Activated CD8-positive, alpha-beta T cell treated with anti-CD3 and anti-CD28 coated beads, Interleukin-2, amount 10 ng/mL, durations not matched to agents 7 days and 5 days (primary cell): ENCODE measurements at regions of chr6 and their contacts with region 1.

Region 1: DNA sequence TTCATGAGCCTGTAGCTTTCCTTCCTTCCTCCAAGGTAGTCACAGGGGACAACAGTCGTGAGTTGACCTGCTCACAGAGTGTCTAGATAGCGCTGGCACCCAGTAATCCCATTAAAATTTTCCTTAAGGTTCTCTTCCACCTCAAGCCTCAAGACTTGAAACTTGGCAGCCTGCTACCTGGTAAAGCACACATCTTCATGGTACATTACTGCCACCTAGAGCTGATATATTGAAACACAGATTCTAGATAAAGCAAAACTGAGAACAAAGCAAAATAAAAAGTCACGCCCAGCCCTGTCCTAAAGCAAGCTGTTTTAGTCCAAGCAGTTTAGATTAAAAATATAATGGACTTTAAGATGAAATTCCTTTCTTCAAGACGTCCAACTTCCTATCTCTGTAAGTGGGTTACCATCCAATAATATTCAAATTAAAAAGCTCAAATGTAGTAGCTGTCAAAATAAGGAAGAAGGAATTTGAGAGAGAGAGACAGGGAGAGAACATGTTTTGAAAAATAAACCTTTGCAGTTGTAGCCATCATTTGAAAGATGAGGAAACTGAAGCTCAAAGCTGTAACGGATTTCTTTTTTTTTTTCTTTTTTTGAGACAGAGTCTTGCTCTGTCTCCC is 50.7 kb upstream of the CD83 start:
- DNase-seq: peak; percentile 31
- ATAC-seq: peak; percentile 84
- H3K4me3 Mint-ChIP-seq: no peak overlapping the region
- H3K27ac Mint-ChIP-seq: no peak overlapping the region
- H3K4me1 Mint-ChIP-seq: peaks cover 13% of the 10 kb centered on the region
- H3K27me3 Mint-ChIP-seq: peaks cover 21% of the 10 kb centered on the region

Region 2: DNA sequence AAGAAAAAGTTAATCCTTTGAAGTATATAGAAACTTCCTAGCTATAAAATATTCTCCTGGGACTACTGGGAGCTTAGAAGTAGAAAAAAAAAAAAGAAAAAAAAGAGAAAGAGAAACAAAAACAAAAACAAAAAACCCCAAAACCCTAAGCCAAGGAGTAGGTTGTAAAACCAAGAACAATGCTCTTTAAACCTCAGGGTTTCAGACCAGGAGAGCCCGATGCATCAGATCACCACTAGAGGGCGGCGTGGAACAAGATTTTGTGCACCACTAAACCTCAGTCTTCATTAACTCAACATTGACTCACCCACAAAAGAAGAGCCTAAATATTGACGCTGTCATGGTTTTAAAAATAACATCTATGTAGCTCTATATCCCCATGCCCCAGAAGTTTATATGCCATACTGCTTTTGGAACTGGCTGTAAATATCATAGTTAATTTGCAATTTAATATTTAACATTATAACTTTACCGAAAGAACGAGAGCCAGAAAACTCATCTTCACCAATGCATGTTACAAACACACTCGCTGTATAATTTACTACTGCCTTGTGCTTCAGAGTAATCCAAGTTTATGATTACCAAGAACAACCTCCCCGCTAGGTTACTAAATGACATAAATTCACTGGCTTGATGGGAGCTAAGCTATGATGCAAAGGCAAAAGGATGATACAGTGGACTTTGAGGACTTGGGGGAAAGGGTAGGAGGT is 271.7 kb before region 1 on chr6:
- CTCF ChIA-PET with region 1: interaction called, 24 read pairs
- POLR2A ChIA-PET with region 1: no interaction called
- DNase-seq: peak; percentile 91
- ATAC-seq: peak; percentile 96
- H3K4me3 Mint-ChIP-seq: no peak overlapping the region
- H3K27ac Mint-ChIP-seq: no peak overlapping the region
- H3K4me1 Mint-ChIP-seq: peaks cover 14% of the 10 kb centered on the region
- H3K27me3 Mint-ChIP-seq: no peaks in the 10 kb centered on the region

Region 3: GRCh38 chr6:13908955-13909381 is 157.9 kb before region 1 on chr6:
- CTCF ChIA-PET with region 1: interaction called, 67 read pairs
- POLR2A ChIA-PET with region 1: no interaction called
- DNase-seq: peak; percentile 58
- ATAC-seq: peak; percentile 79
- H3K4me3 Mint-ChIP-seq: no peak overlapping the region
- H3K27ac Mint-ChIP-seq: no peak overlapping the region
- H3K4me1 Mint-ChIP-seq: peaks cover 1% of the 10 kb centered on the region
- H3K27me3 Mint-ChIP-seq: peaks cover 44% of the 10 kb centered on the region

Region 4: DNA sequence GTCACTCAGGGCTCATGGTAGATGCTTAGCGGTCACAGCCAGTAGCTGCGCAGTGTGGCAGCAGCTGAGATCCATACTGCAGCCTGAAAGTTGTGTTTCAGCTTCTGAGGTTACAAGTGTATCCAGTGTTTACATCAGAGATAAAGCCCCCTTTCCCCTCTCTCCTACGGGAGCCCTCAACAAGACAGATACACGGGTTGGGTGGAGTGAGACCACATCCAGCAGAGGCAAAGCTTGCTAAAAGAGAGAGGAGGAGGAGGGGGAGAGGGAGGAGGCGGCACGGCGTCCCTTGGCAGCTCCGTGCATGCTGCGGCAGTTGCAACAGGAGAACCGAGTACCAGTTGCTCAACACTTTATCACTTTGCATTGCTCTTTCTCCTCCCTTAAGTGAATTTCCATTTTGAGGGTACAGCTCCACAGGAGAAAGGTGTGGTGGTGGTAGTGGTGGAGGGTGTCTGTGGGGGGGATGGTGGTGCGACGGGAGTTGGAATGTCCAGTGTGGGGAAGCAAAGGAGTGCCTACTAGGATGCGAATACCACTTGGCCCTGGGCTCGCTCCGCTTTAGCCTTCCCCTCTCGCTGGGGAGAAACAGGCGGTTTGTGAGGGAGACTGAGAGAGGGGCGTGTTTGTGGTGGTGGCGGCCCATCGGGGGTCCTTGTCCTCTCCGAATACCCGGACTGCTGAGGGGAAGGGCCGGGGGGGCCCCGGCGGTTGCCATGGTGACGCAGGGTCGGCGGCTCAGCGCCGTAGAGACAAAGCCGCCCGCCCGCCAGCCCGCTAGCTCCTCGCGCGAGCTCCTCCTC is 142.5 kb before region 1 on chr6:
- CTCF ChIA-PET with region 1: interaction called, 29 read pairs
- POLR2A ChIA-PET with region 1: no interaction called
- DNase-seq: peak; percentile 50
- ATAC-seq: peak; percentile 57
- H3K4me3 Mint-ChIP-seq: peak overlapping the region; percentile 61
- H3K27ac Mint-ChIP-seq: no peak overlapping the region
- H3K4me1 Mint-ChIP-seq: peaks cover 14% of the 10 kb centered on the region
- H3K27me3 Mint-ChIP-seq: peaks cover 58% of the 10 kb centered on the region

Region 5: GRCh38 chr6:13953061-13953705 is 113.7 kb before region 1 on chr6:
- CTCF ChIA-PET with region 1: no interaction called
- POLR2A ChIA-PET with region 1: no interaction called
- DNase-seq: no peak
- ATAC-seq: no peak
- H3K4me3 Mint-ChIP-seq: no peak overlapping the region
- H3K27ac Mint-ChIP-seq: no peak overlapping the region
- H3K4me1 Mint-ChIP-seq: no peaks in the 10 kb centered on the region
- H3K27me3 Mint-ChIP-seq: peaks cover 4% of the 10 kb centered on the region

Region 6: GRCh38 chr6:14055541-14055940 is 11.4 kb before region 1 on chr6:
- CTCF ChIA-PET with region 1: interaction called, 11 read pairs
- POLR2A ChIA-PET with region 1: no interaction called
- DNase-seq: no peak
- ATAC-seq: no peak
- H3K4me3 Mint-ChIP-seq: no peak overlapping the region
- H3K27ac Mint-ChIP-seq: no peak overlapping the region
- H3K4me1 Mint-ChIP-seq: no peaks in the 10 kb centered on the region
- H3K27me3 Mint-ChIP-seq: peaks cover 26% of the 10 kb centered on the region

Region 7: GRCh38 chr6:14118091-14118439 is 51.2 kb after region 1 on chr6:
- CTCF ChIA-PET with region 1: interaction called, 11 read pairs
- POLR2A ChIA-PET with region 1: no interaction called
- DNase-seq: no peak
- ATAC-seq: peak; percentile 12
- H3K4me3 Mint-ChIP-seq: peak overlapping the region; percentile 90
- H3K27ac Mint-ChIP-seq: peak overlapping the region; percentile 90
- H3K4me1 Mint-ChIP-seq: peaks cover 35% of the 10 kb centered on the region
- H3K27me3 Mint-ChIP-seq: peaks cover 7% of the 10 kb centered on the region

Region 8: GRCh38 chr6:14135893-14136539 is 69.1 kb after region 1 on chr6:
- CTCF ChIA-PET with region 1: interaction called, 13 read pairs
- POLR2A ChIA-PET with region 1: no interaction called
- DNase-seq: no peak
- ATAC-seq: no peak
- H3K4me3 Mint-ChIP-seq: no peak overlapping the region
- H3K27ac Mint-ChIP-seq: no peak overlapping the region
- H3K4me1 Mint-ChIP-seq: no peaks in the 10 kb centered on the region
- H3K27me3 Mint-ChIP-seq: no peaks in the 10 kb centered on the region